ENCODE measurements at regions of chr13 and their contacts with region 1.

Region 1: GRCh38 chr13:113840541-113841352 is 23.1 kb downstream of the GAS6 start:
- DNase-seq: no peak
- ATAC-seq: no peak
- H3K4me3 ChIP-seq: no peak overlapping the region
- H3K27ac ChIP-seq: peak overlapping the region; percentile 65
- H3K4me1 ChIP-seq: peaks cover 33% of the 10 kb centered on the region
- H3K27me3 ChIP-seq: no peaks in the 10 kb centered on the region
- CTCF ChIP-seq: no peak

Region 2: GRCh38 chr13:113812178-113813040 is 28.3 kb before region 1 on chr13:
- CTCF ChIA-PET with region 1: no interaction called
- POLR2A ChIA-PET with region 1: interaction called, 13 read pairs
- in situ Hi-C with region 1: no loop called
- intact Hi-C with region 1: no loop called
- DNase-seq: no peak
- ATAC-seq: no peak
- H3K4me3 ChIP-seq: no peak overlapping the region
- H3K27ac ChIP-seq: no peak overlapping the region
- H3K4me1 ChIP-seq: peaks cover 13% of the 10 kb centered on the region
- H3K27me3 ChIP-seq: no peaks in the 10 kb centered on the region
- CTCF ChIP-seq: no peak

Region 3: GRCh38 chr13:113998669-113999450 is 158.1 kb after region 1 on chr13:
- CTCF ChIA-PET with region 1: no interaction called
- POLR2A ChIA-PET with region 1: interaction called, 14 read pairs
- in situ Hi-C with region 1: no loop called
- intact Hi-C with region 1: no loop called
- DNase-seq: no peak
- ATAC-seq: no peak
- H3K4me3 ChIP-seq: no peak overlapping the region
- H3K27ac ChIP-seq: no peak overlapping the region
- H3K4me1 ChIP-seq: no peaks in the 10 kb centered on the region
- H3K27me3 ChIP-seq: no peaks in the 10 kb centered on the region
- CTCF ChIP-seq: no peak

Measured in Panc1 (cell line).